A673 (cell line): ENCODE measurements at regions of chr4 and their contacts with region 1.

Region 1: GRCh38 chr4:54233277-54233696 is 4.2 kb downstream of the PDGFRA start:
- DNase-seq: peak; percentile 79
- H3K4me3 ChIP-seq: peak overlapping the region; percentile 42
- H3K27ac ChIP-seq: no peak overlapping the region
- H3K4me1 ChIP-seq: no peaks in the 10 kb centered on the region
- H3K27me3 ChIP-seq: peaks cover 41% of the 10 kb centered on the region
- CTCF ChIP-seq: peak; percentile 58; the same call in 1 of the 2 replicates

Region 2: DNA sequence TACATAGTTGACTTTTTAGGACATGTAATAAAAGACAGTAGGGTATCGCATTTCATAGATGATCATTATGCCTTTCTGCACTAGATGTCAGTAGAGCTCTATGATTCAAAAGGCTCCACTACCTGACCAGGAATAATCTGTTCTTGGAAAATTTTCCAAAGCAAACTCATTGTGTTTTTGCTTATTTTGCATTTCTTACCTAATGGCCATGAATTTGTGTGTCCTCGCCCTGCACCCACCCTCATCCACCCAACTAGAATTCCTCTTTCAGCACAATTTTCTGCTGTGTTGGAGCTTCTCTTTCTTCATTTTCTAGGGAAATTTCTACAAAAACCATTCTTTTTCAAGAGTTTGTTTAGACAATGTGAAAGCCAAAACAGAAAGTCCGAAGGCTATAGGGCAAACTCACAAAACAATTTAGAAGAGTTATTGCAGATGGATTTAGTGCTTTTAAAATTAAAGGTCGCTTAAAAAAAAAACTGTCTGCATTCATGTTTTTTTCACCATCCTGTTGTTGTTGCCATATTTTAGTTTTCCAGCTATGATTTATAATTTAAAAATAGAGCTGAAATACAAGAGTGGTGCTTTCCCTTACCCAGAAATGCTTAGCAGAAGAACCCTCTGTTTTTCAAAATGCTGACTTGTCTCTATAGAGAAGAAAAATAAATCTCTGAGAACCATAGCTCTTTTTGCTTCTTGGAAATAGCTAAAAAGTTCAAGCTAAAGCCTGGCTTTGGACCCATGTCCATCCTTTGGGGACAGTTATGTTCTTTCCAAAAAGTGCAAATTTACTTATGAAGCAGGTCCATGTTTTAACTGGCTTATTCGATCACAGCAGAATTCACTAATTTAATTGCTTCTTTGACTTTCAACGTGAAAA is 1998.5 kb before region 1 on chr4:
- CTCF ChIA-PET with region 1: interaction called, 3 read pairs
- POLR2A ChIA-PET with region 1: no interaction called
- intact Hi-C with region 1: loop called (anchors 10 kb)
- DNase-seq: peak; percentile 48
- H3K4me3 ChIP-seq: no peak overlapping the region
- H3K27ac ChIP-seq: no peak overlapping the region
- H3K4me1 ChIP-seq: no peaks in the 10 kb centered on the region
- H3K27me3 ChIP-seq: no peaks in the 10 kb centered on the region
- CTCF ChIP-seq: peak; percentile 57

Region 3: DNA sequence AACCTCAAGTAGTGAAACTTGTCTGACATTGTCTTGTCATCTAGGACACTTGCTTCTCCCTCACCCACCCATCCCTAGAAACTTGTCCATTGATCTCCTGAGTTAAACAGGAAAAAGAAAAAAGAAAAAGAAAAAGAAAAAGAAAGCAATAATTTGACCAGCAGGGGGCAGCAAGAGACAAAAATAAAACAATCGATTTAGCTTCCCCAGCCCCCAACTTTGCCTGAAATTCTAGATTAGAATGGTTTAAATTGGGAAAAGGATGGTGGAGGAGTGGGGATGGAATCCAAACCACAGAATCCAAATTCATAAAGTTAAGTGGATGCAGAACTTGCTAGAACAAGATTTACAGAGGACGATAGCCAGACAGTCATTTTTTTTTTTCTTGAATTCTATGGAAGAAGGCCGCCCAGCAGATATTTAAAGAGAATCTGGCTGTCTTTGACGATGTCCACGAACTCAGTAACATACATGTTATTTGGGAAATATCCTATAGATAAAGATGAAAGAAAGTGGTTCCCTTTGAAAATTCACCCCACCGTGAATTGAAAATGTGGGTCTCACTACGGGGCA is 1857.1 kb before region 1 on chr4:
- CTCF ChIA-PET with region 1: interaction called, 3 read pairs
- POLR2A ChIA-PET with region 1: no interaction called
- intact Hi-C with region 1: loop called (anchors 10 kb)
- DNase-seq: peak; percentile 50
- H3K4me3 ChIP-seq: no peak overlapping the region
- H3K27ac ChIP-seq: no peak overlapping the region
- H3K4me1 ChIP-seq: no peaks in the 10 kb centered on the region
- H3K27me3 ChIP-seq: no peaks in the 10 kb centered on the region
- CTCF ChIP-seq: peak; percentile 55

Region 4: DNA sequence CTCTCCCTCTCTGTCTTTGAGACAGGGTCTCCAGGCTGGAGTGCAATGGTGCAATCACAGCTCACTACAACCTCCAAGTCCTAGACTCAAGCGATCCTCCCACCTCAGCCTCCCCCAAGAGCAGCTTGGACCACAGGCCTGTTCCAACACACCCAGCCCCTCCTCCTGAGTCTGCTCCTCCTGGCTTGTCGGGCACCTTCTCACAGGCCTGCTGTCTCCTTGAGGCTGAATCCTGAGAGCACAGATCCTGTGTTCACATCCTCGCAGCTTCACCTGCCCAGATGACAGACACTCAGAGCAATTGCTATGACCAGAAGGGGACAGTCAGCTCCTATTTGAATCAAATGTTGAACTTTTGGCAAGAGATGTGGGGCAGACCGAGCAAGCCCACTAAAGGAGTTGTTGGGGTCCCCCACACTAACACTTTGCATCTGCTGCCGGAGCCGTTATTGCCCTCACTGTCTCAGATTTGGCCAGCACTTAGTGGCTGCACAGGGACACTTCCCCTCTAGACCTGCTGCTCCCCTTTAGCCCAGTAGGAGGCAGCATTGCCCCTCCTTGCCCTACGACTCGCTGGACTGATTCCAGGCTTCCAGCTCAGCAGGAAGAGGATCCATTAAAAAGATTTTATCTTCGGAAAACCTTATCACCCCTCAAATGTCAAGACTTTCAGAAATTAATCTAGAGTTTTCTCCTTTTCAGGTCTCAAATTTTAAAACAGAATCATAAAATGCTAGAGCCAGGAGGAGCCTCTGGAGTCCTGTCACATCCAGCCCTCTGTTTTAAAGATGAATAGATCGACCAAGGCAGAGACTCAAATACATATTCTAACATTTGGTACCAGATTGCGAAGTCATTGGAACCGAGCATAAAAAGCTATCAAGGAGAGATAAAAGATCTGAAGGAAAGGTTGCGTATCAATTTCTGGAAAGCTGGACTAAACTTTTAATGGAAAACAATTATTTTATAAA is 1687.9 kb before region 1 on chr4:
- CTCF ChIA-PET with region 1: interaction called, 7 read pairs
- POLR2A ChIA-PET with region 1: no interaction called
- intact Hi-C with region 1: loop called (anchors 10 kb)
- DNase-seq: peak; percentile 56
- H3K4me3 ChIP-seq: no peak overlapping the region
- H3K27ac ChIP-seq: no peak overlapping the region
- H3K4me1 ChIP-seq: peaks cover 2% of the 10 kb centered on the region
- H3K27me3 ChIP-seq: no peaks in the 10 kb centered on the region
- CTCF ChIP-seq: peak; percentile 67

Region 5: GRCh38 chr4:53196882-53197771 is 1036.2 kb before region 1 on chr4:
- CTCF ChIA-PET with region 1: interaction called, 7 read pairs
- POLR2A ChIA-PET with region 1: no interaction called
- intact Hi-C with region 1: loop called (anchors 5 kb)
- DNase-seq: peak; percentile 77
- H3K4me3 ChIP-seq: peak overlapping the region; percentile 18
- H3K27ac ChIP-seq: no peak overlapping the region
- H3K4me1 ChIP-seq: peaks cover 9% of the 10 kb centered on the region
- H3K27me3 ChIP-seq: peaks cover 32% of the 10 kb centered on the region
- CTCF ChIP-seq: peak; percentile 61

Region 6: GRCh38 chr4:53313510-53313909 is 919.8 kb before region 1 on chr4:
- CTCF ChIA-PET with region 1: no interaction called
- POLR2A ChIA-PET with region 1: no interaction called
- intact Hi-C with region 1: loop called (anchors 5 kb)
- DNase-seq: peak; percentile 60
- H3K4me3 ChIP-seq: no peak overlapping the region
- H3K27ac ChIP-seq: no peak overlapping the region
- H3K4me1 ChIP-seq: peaks cover 17% of the 10 kb centered on the region
- H3K27me3 ChIP-seq: no peaks in the 10 kb centered on the region
- CTCF ChIP-seq: peak; percentile 54